ENCODE measurements at regions of chr17 and their contacts with region 1.

Region 1: GRCh38 chr17:12667299-12667958 is 1.7 kb downstream of the MYOCD start:
- DNase-seq: no peak
- ATAC-seq: peak; percentile 63

Region 2: GRCh38 chr17:12261354-12261753 is 406.1 kb before region 1 on chr17:
- intact Hi-C with region 1: loop called (anchors 10 kb)
- DNase-seq: no peak
- ATAC-seq: no peak

Region 3: GRCh38 chr17:12545877-12546513 is 121.4 kb before region 1 on chr17:
- intact Hi-C with region 1: no loop called
- DNase-seq: no peak
- ATAC-seq: peak; percentile 77

Region 4: GRCh38 chr17:13106171-13106570 is 438.7 kb after region 1 on chr17:
- intact Hi-C with region 1: loop called (anchors 10 kb)
- DNase-seq: no peak
- ATAC-seq: no peak

Measured in sciatic nerve (tissue), 2 donors.